ENCODE measurements at regions of chr4 and their contacts with region 1.

Region 1: GRCh38 chr4:113675731-113676697 is 85.5 kb downstream of the CAMK2D start:
- DNase-seq: no peak
- H3K4me3 ChIP-seq: no peak overlapping the region
- H3K27ac ChIP-seq: peak overlapping the region; percentile 35 to 37
- H3K4me1 ChIP-seq: peaks cover 0 to 17% of the 10 kb centered on the region in 2 donors
- H3K27me3 ChIP-seq: no peaks in the 10 kb centered on the region
- CTCF ChIP-seq: no peak

Region 2: DNA sequence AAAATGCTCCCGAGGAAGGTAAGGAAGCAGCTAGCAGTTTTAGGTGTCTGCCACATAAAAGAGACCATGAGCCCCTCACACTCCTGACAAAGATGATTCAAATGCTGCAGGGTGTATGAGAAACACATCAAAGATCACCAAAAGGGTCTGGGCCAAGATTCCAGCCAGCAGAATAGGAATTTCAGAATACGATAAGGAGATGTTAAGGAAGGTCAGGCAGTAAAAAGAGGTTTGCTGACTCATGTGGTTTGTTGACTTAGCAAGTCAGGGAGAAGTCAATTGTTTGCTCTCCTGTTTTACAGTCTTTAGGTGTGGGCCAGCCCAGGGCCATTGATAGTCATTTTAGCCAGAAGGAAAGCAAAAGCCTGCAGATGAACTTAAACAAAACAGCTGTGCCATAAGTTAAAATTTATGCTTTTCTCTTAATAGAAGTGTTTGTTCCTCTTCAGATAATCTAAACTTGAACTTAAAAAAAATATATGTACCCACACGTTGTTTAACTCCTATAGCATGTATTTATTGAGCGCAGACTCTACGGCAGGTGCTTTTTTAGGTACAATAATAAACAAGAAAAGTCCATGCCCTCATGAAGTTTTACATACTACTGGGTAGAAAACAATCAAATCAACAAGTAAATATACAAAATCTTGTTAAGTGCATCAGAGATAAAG is 30.1 kb before region 1 on chr4:
- intact Hi-C with region 1: no loop called
- DNase-seq: no peak
- H3K4me3 ChIP-seq: no peak overlapping the region
- H3K27ac ChIP-seq: no peak overlapping the region
- H3K4me1 ChIP-seq: peaks cover 6 to 21% of the 10 kb centered on the region in 2 donors
- H3K27me3 ChIP-seq: no peaks in the 10 kb centered on the region
- CTCF ChIP-seq: no peak

Region 3: GRCh38 chr4:113657586-113658233 is 18.3 kb before region 1 on chr4:
- intact Hi-C with region 1: loop called (anchors 2 kb)
- DNase-seq: no peak
- H3K4me3 ChIP-seq: peak overlapping the region in 1 of 2 donors; percentile 26
- H3K27ac ChIP-seq: peak overlapping the region; percentile 28 to 56
- H3K4me1 ChIP-seq: peaks cover 0 to 9% of the 10 kb centered on the region in 2 donors
- H3K27me3 ChIP-seq: no peaks in the 10 kb centered on the region
- CTCF ChIP-seq: no peak

Measured in ascending aorta (tissue), 2 donors.